Astrocyte of the spinal cord (primary cell): ENCODE measurements at regions of chr10 and their contacts with region 1.

Region 1: DNA sequence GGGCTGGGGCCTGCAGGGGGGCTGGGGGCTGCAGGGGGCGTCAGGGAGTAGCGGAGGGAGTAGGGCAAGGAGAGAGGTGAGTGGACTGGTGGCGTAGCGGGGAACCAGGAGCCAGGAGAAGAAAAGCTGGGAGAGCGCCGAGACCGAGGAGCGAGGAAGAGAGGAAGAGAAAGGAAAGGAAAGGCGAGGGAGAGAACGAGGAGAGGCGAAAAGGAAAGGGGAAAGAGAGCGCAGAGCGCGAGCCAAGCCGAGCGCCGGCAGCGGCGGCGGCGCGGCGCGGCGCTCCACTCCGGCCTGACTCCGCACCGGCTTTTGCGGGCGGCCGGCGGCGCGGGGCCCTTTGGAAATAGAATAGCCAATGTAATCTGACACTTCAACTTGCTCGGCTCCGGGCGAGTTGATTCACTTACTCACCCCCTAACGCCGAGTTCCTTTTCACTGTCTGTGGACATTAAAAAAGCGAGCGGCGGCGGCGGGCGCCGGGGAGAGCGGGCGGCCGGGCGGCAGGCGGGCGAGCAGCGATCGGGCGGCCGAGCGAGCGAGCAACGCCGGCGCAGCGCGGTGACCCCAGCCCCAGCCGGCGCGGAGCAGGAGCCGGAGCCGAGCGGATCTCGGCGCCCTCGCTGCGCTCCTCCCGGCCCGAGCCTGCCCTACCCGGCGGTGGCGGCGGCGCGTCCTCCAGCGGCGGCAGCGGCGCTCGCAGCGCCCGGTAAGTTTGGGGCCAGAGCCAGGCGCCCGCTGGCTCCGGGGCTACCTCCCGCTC is at the start of gene ZMIZ1:
- DNase-seq: peak; percentile 92
- H3K4me3 ChIP-seq: peak within 1 kb of the TSS; percentile 89
- CTCF ChIP-seq: peak; percentile 28

Region 2: GRCh38 chr10:78944723-78945312 is 123.9 kb before region 1 on chr10:
- in situ Hi-C with region 1: loop called (anchors 25 kb)
- DNase-seq: peak; percentile 98
- H3K4me3 ChIP-seq: no peak overlapping the region
- CTCF ChIP-seq: peak; percentile 34

Region 3: GRCh38 chr10:79195091-79195923 is 126.6 kb after region 1 on chr10:
- in situ Hi-C with region 1: loop called (anchors 10 kb)
- DNase-seq: peak; percentile 87
- H3K4me3 ChIP-seq: no peak overlapping the region
- CTCF ChIP-seq: peak; percentile 89